ENCODE measurements at regions of chr6 and their contacts with region 1.

Region 1: GRCh38 chr6:75601304-75602245 is at the start of gene SENP6:
- DNase-seq: peak; percentile 68
- H3K4me3 Mint-ChIP-seq: peak within 1 kb of the TSS; percentile 100
- H3K27ac Mint-ChIP-seq: peak within 1 kb of the TSS; percentile 99
- H3K4me1 Mint-ChIP-seq: peaks cover 49% of the 10 kb centered on the region
- H3K27me3 Mint-ChIP-seq: no peaks in the 10 kb centered on the region
- total RNA-seq, gene SENP6: 81.2 and 81.7 TPM in 2 replicates

Region 2: DNA sequence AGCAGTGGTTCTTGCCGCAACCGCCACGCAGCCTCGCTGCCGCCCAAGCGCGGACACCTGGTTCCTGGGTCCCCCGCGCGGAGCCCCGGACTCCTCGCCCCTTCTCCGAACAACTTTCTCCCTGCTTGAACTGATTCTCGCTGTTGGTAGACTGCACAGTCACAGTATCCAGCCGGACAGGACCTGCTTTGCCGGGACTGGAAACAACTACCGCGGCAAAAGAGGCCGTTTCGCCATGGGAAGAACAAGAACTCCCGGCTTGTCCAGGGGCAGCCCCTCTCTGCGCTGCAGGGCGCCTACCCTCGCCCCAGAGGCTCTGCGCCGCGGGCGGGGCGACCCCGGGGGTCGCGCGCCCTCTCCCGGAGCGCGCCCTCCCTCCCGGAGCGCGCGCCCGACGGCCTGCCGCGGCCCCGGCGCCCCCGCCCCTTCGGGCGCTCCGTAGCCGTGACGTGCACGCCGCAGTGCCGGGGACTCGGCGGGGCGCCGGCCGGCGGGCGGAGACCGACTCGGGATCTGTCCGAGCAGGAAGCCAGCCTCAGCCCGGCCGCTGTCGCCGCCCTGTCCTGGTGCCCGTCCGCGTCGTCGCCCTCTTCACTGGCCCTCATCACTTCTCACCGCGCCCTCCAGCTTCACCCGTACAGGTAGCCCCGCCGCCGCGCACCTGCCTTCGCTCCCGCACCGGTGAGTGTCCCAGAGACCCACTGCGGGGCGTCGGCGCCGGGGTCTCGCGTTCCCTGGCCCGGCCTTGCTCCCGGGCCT is 147.3 kb after region 1 on chr6 and contains the start of gene MYO6:
- intact Hi-C with region 1: loop called (anchors 5 kb)
- DNase-seq: peak; percentile 16
- H3K4me3 Mint-ChIP-seq: peak within 1 kb of the TSS; percentile 77
- H3K27ac Mint-ChIP-seq: peak within 1 kb of the TSS; percentile 40
- H3K4me1 Mint-ChIP-seq: no peaks in the 10 kb centered on the region
- H3K27me3 Mint-ChIP-seq: peaks cover 60% of the 10 kb centered on the region
- total RNA-seq, gene MYO6: 0.37 and 0.83 TPM in 2 replicates

Measured in activated T-helper 1 cell treated with anti-CD3 and anti-CD28 coated beads, Interleukin-12 subunit alpha, Interleukin-12 subunit beta, Interleukin-2, Interleukin-4 antibody, amounts not matched to agents 30 ng/mL and 10 ng/mL and 1 ng/mL, durations not matched to agents 14 hours and 24 hours and 36 hours (primary cell).